Mammary epithelial cell (primary cell): ENCODE measurements at regions of chr15 and their contacts with region 1.

Region 1: GRCh38 chr15:31280046-31280830 is 46.4 kb upstream of the KLF13 start:
- DNase-seq: peak; percentile 31
- H3K4me3 ChIP-seq: no peak overlapping the region
- H3K27ac ChIP-seq: no peak overlapping the region
- H3K4me1 ChIP-seq: peaks cover 9% of the 10 kb centered on the region
- H3K27me3 ChIP-seq: no peaks in the 10 kb centered on the region
- CTCF ChIP-seq: no peak

Region 2: GRCh38 chr15:31062310-31062847 is 217.9 kb before region 1 on chr15:
- CTCF ChIA-PET with region 1: no interaction called
- dilution Hi-C with region 1: no loop called
- in situ Hi-C with region 1: no loop called
- intact Hi-C with region 1: no loop called
- DNase-seq: no peak
- H3K4me3 ChIP-seq: no peak overlapping the region
- H3K27ac ChIP-seq: no peak overlapping the region
- H3K4me1 ChIP-seq: no peaks in the 10 kb centered on the region
- H3K27me3 ChIP-seq: peaks cover 10% of the 10 kb centered on the region
- CTCF ChIP-seq: no peak

Region 3: GRCh38 chr15:31081588-31082250 is 198.5 kb before region 1 on chr15:
- CTCF ChIA-PET with region 1: no interaction called
- dilution Hi-C with region 1: no loop called
- in situ Hi-C with region 1: no loop called
- intact Hi-C with region 1: no loop called
- DNase-seq: no peak
- H3K4me3 ChIP-seq: no peak overlapping the region
- H3K27ac ChIP-seq: no peak overlapping the region
- H3K4me1 ChIP-seq: peaks cover 4% of the 10 kb centered on the region
- H3K27me3 ChIP-seq: no peaks in the 10 kb centered on the region
- CTCF ChIP-seq: no peak

Region 4: DNA sequence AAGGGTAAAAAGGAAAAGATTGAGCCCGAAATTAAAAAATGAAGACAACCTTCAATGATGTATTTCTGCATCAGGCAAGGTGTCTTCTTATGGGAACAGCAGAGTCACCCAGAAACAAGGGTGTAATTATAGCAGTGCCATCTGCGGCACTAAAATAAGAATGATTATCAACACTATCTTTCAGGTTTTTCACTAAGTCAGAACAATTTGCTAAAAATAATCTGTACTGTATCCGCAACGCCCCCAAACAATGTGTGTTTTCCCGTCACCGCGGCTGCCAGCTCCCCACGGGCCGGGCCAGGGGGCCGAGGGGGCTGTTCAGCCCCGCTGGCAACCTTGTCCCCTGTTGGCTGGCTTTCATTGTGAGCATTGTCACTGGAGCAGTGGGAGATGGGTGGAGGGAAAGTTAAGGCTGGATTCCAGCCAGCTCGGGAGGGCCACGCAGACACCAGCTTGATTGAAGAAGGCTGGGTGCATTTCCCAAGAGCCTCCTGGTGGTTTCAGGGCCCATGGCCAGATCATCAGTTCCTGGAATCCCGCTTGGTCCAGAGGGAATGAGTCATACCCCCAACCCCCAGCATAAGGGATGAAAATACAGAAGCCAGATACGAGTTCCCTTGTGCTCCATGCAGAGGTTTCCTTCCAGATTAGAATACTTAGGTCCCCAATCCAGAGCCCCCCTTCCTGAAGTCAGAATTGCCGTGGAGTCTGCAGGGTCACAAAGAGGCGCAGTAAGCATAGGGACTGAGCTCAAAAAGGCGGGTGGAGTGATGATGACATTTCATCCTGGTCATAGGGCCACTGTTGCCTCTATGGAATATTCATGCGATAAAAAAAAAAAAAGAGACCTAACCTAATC is 43.8 kb before region 1 on chr15:
- CTCF ChIA-PET with region 1: no interaction called
- dilution Hi-C with region 1: no loop called
- in situ Hi-C with region 1: no loop called
- intact Hi-C with region 1: loop called (anchors 10 kb)
- DNase-seq: peak; percentile 63
- H3K4me3 ChIP-seq: no peak overlapping the region
- H3K27ac ChIP-seq: no peak overlapping the region
- H3K4me1 ChIP-seq: peaks cover 8% of the 10 kb centered on the region
- H3K27me3 ChIP-seq: no peaks in the 10 kb centered on the region
- CTCF ChIP-seq: peak in 1 of 2 donors; percentile 23

Region 5: DNA sequence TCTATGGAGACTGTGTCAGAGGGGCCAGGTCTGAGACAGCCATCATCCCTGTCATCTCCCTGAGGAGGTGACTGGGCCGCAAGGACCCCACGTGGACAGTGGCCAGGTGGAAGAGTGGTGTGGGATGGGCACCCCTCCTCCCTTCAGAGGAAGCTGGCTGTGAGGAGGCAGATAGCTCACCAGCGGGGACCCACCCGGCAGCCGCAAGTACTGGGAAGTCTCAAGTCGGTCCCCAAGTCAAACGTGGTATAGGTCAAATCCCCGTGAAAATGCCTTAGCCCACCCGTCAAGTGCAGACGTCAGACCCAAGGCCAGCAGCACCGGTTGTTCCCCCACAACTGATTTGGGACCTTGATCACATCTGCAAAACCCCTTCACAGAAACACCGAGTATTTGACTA is 34.1 kb after region 1 on chr15:
- CTCF ChIA-PET with region 1: no interaction called
- dilution Hi-C with region 1: no loop called
- in situ Hi-C with region 1: no loop called
- intact Hi-C with region 1: loop called (anchors 2 kb)
- DNase-seq: no peak
- H3K4me3 ChIP-seq: no peak overlapping the region
- H3K27ac ChIP-seq: no peak overlapping the region
- H3K4me1 ChIP-seq: no peaks in the 10 kb centered on the region
- H3K27me3 ChIP-seq: peaks cover 2% of the 10 kb centered on the region
- CTCF ChIP-seq: no peak

Region 6: DNA sequence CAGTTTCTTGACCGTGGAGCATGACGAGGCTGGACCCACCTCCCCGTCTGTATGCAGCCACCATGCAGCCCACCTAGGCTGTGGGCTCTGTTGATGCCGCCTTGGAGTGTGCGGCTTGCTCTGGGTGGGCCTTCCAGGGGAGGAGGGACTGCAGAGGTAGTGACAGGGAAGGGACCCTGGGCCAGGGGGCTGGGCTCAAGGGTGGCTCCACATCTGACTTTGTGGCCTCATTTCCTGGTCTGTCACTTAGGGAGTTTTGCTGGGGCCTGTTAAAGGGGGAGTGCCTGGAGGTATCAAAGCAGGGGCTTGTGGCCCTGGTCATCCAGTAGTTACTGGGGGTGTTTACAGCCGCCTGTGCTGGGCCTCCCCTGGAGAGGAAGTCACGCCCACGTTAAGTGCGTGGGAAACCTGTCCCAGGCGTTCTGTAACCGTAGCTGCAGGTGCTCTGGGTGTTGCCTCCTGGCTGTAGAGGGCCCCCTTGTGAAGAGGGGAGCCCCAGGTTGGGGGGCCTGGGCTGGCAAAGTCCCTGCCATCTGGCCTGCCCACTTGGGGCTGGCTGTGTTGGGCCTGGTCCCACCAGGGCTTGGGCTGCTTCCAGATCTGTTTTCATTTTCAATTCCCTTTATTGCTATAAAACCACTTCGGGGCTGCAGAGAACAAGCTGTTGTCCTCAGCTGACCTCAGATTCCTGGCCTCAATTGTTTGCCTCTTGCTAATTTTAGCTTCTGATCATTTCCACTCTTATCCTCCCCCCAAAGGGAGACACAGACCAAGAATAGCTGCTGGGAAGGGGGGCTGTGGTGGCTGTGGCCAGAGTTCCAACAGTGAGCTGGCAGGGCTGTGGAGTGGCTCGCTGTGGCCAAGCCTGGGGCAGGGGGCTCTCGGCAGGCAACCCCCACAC is 72.9 kb after region 1 on chr15:
- CTCF ChIA-PET with region 1: no interaction called
- dilution Hi-C with region 1: no loop called
- in situ Hi-C with region 1: no loop called
- intact Hi-C with region 1: no loop called
- DNase-seq: no peak
- H3K4me3 ChIP-seq: no peak overlapping the region
- H3K27ac ChIP-seq: no peak overlapping the region
- H3K4me1 ChIP-seq: peaks cover 40% of the 10 kb centered on the region
- H3K27me3 ChIP-seq: no peaks in the 10 kb centered on the region
- CTCF ChIP-seq: no peak